Pancreas (tissue), 10 donors: ENCODE measurements at regions of chr16 and their contacts with region 1.

Region 1: GRCh38 chr16:88194397-88195268 is 188.1 kb upstream of the ZNF469 start:
- DNase-seq: peak in 2 of 6 donors; percentile 27 to 48
- ATAC-seq: peak; percentile 68 to 84 (median 78)
- H3K4me3 ChIP-seq: no peak overlapping the region
- H3K27ac ChIP-seq: no peak overlapping the region
- H3K4me1 ChIP-seq: no peaks in the 10 kb centered on the region
- H3K27me3 ChIP-seq: no peaks in the 10 kb centered on the region
- CTCF ChIP-seq: no peak

Region 2: DNA sequence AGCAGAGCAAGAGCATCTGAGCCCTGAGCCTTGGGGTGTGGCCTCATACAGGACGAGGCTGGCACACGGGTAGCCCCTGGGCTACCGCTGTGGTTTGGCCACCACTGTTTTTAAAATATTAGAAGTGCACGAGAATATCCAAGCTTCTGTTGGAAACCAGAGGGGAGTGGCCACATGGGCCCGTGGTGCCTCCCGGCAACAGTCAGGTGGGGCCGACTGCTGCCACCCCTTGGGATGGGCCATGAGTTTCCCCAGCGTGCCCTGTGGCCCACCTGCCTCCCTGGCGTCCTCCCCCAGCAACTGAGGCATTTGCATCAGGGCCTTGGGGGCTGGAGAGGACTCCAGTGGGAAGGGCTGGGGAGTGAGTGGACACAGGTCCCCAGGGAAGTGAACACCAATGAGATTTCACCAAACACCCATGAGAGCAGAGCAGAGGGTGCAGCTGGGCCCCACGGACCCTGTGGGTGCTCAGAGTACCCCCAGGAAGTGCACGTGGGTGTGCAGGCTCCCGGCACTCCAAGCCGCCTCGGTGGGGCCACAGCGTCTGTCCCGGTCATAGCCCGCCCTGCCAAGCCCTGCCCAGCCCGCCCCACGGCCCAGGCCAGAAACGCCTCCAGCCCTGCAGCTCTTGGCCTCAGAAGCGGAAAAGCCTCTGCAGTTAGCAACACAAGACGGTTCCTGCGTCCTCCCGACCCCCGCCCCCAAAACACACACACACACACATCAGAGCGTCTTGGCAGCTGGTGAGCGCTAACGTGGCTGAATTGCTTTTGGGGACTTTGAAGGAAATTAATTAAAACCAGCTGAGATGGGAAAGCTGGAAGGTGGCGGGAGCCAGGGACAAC is 210.8 kb after region 1 on chr16:
- intact Hi-C with region 1: loop called in 1 of 3 experiments (anchors 10 kb)
- DNase-seq: no peak
- ATAC-seq: peak in 2 of 4 donors; percentile 36 to 49
- H3K4me3 ChIP-seq: no peak overlapping the region
- H3K27ac ChIP-seq: no peak overlapping the region
- H3K4me1 ChIP-seq: no peaks in the 10 kb centered on the region
- H3K27me3 ChIP-seq: peaks cover 0 to 2% (median 0%) of the 10 kb centered on the region in 4 donors
- CTCF ChIP-seq: no peak

Region 3: DNA sequence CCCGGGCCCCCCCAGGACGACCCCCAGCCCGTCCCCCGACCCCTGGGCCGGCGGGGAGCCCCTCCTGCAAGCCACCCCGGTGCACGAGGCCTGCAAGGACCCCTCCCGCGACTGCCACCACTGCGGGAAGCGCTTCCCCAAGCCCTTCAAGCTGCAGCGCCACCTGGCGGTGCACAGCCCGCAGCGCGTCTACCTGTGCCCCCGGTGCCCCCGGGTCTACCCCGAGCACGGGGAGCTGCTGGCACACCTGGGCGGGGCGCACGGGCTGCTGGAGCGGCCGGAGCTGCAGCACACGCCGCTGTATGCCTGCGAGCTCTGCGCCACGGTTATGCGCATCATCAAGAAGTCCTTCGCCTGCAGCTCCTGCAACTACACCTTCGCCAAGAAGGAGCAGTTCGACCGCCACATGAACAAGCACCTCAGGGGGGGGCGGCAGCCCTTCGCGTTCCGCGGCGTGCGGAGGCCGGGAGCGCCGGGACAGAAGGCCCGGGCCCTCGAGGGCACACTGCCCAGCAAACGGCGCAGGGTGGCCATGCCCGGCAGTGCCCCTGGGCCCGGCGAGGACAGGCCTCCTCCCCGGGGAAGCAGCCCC is 242.8 kb after region 1 on chr16:
- intact Hi-C with region 1: loop called in 2 of 3 experiments (anchors 5 to 10 kb)
- DNase-seq: peak in 3 of 6 donors; percentile 68 to 91 (median 79)
- ATAC-seq: peak; percentile 47 to 70 (median 63)
- H3K4me3 ChIP-seq: no peak overlapping the region
- H3K27ac ChIP-seq: no peak overlapping the region
- H3K4me1 ChIP-seq: no peaks in the 10 kb centered on the region
- H3K27me3 ChIP-seq: no peaks in the 10 kb centered on the region
- CTCF ChIP-seq: peak; percentile 87 to 91 (median 87)